IMR-90 (cell line): ENCODE measurements at regions of chr12 and their contacts with region 1.

Region 1: DNA sequence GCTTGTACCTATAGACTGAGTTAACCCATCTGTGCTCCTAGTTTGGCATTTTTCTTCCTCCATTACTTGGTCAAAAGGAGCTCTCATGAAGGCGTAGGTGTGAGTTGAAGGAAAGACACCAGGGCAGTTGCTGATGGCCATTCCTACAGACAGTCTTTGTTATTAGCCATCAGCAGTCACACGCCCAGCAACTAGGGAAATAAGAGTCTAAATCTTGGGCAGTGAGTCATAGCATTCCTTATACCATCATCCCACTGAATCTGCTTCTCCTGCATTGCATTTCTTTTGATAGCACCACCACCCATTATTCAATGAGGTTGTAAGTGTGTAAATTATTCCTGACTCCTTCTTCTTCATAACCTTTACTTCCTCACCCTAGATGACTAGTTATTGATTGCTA is 150.9 kb upstream of the IGF1 start:
- DNase-seq: peak; percentile 82
- ATAC-seq: peak; percentile 89
- H3K4me3 ChIP-seq: no peak overlapping the region
- H3K27ac ChIP-seq: no peak overlapping the region
- H3K4me1 ChIP-seq: peaks cover 8% of the 10 kb centered on the region; the same call in 1 of the 2 replicates
- H3K27me3 ChIP-seq: no peaks in the 10 kb centered on the region
- CTCF ChIP-seq: no peak
- POLR2A ChIP-seq: no peak
- RAD21 ChIP-seq: no peak

Region 2: GRCh38 chr12:102567031-102567985 is 64.0 kb before region 1 on chr12:
- CTCF ChIA-PET with region 1: no interaction called
- POLR2A ChIA-PET with region 1: no interaction called
- dilution Hi-C with region 1: no loop called
- in situ Hi-C with region 1: no loop called
- intact Hi-C with region 1: loop called (anchors 5 kb)
- DNase-seq: peak; percentile 74
- ATAC-seq: peak; percentile 91
- H3K4me3 ChIP-seq: no peak overlapping the region
- H3K27ac ChIP-seq: peak overlapping the region; percentile 95
- H3K4me1 ChIP-seq: peaks cover 15% of the 10 kb centered on the region
- H3K27me3 ChIP-seq: no peaks in the 10 kb centered on the region
- CTCF ChIP-seq: no peak
- POLR2A ChIP-seq: no peak
- RAD21 ChIP-seq: no peak

Region 3: DNA sequence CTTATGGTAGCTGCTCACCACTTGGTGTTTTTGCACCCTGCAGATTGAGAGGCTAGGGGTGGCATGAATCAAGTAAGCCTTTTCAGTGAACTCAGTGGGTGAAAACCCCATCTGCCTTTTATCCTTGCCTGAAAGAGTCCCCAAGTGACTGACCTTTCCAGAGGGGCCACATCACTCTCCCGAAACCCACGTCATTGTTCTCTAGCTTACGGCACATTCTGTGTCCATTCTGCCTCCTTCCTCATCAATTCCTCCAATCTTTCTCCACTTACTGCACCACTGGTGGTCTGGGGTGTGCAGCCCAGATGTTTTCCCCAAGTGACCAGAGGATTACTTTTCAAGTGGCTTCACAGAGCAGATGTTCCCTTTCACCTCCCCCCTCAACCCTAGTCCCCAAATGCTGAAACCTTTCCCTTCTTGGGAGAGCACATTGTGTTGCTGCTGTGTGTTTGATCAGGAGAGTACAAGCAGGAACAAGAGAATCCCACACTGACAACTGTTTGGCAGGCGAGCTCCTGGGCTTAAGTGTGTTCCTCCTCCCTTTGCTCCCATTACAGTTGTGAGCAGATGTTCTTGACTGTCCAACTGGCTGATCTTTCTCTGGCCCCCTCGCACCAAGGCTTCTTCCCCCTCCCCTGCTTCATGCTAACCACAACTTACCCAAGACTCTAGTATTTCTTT is 12.9 kb before region 1 on chr12:
- CTCF ChIA-PET with region 1: no interaction called
- POLR2A ChIA-PET with region 1: no interaction called
- dilution Hi-C with region 1: no loop called
- in situ Hi-C with region 1: no loop called
- intact Hi-C with region 1: no loop called
- DNase-seq: no peak
- ATAC-seq: no peak
- H3K4me3 ChIP-seq: no peak overlapping the region
- H3K27ac ChIP-seq: no peak overlapping the region
- H3K4me1 ChIP-seq: no peaks in the 10 kb centered on the region
- H3K27me3 ChIP-seq: no peaks in the 10 kb centered on the region
- CTCF ChIP-seq: no peak
- POLR2A ChIP-seq: no peak
- RAD21 ChIP-seq: no peak